WTC11 (cell line): ENCODE measurements at regions of chr2 and their contacts with region 1.

Region 1: GRCh38 chr2:127516031-127516762 is 10.1 kb downstream of the IWS1 start:
- DNase-seq: no peak
- ATAC-seq: no peak
- H3K4me3 Mint-ChIP-seq: no peak overlapping the region
- H3K27ac Mint-ChIP-seq: peak overlapping the region; percentile 65
- H3K4me1 Mint-ChIP-seq: peaks cover 44% of the 10 kb centered on the region
- H3K27me3 Mint-ChIP-seq: no peaks in the 10 kb centered on the region
- CTCF ChIP-seq: no peak

Region 2: DNA sequence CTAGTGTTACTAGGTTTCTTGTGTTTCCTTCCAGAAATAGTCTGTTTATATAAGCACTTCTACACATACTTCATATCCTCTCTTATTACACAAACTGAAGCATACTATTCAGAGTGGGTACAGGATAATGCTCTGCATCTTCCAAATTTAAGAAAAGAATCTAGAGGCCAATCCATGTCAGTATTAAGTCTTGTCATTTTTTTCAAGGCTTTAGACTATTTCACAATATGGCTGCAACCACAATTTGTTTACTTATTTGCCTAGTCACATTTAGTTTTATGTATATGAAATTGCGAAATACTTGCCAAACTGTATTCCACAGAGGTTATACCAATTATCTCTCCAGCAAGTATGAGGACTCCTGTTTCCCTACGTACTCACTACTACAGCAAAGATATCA is 17.8 kb before region 1 on chr2:
- CTCF ChIA-PET with region 1: no interaction called
- POLR2A ChIA-PET with region 1: no interaction called
- DNase-seq: no peak
- ATAC-seq: no peak
- H3K4me3 Mint-ChIP-seq: no peak overlapping the region
- H3K27ac Mint-ChIP-seq: no peak overlapping the region
- H3K4me1 Mint-ChIP-seq: no peaks in the 10 kb centered on the region
- H3K27me3 Mint-ChIP-seq: no peaks in the 10 kb centered on the region
- CTCF ChIP-seq: no peak

Region 3: GRCh38 chr2:127526149-127527000 is 10.2 kb after region 1 on chr2 and contains the start of gene IWS1:
- CTCF ChIA-PET with region 1: interaction called, 3 read pairs
- POLR2A ChIA-PET with region 1: interaction called, 10 read pairs
- DNase-seq: peak; percentile 95
- ATAC-seq: peak; percentile 91
- H3K4me3 Mint-ChIP-seq: peak within 1 kb of the TSS; percentile 98
- H3K27ac Mint-ChIP-seq: peak within 1 kb of the TSS; percentile 99
- H3K4me1 Mint-ChIP-seq: peaks cover 22% of the 10 kb centered on the region
- H3K27me3 Mint-ChIP-seq: peaks cover 7% of the 10 kb centered on the region; the same call in 1 of the 2 replicates
- CTCF ChIP-seq: no peak
- total RNA-seq, gene IWS1: 69.2 to 70.5 TPM (median 69.3 TPM) in 3 replicates